ENCODE measurements at regions of chr22 and their contacts with region 1.

Region 1: GRCh38 chr22:17171313-17172171 is 12.5 kb upstream of the HDHD5 start:
- DNase-seq: peak; percentile 95
- H3K4me3 Mint-ChIP-seq: peak overlapping the region; percentile 74
- H3K27ac Mint-ChIP-seq: peak overlapping the region; percentile 61
- H3K4me1 Mint-ChIP-seq: no peaks in the 10 kb centered on the region
- H3K27me3 Mint-ChIP-seq: peaks cover 18% of the 10 kb centered on the region
- CTCF ChIP-seq: peak; percentile 78

Region 2: GRCh38 chr22:17077255-17077654 is 94.3 kb before region 1 on chr22:
- CTCF ChIA-PET with region 1: interaction called, 22 read pairs
- intact Hi-C with region 1: loop called (anchors 2 kb)
- DNase-seq: no peak
- H3K4me3 Mint-ChIP-seq: no peak overlapping the region
- H3K27ac Mint-ChIP-seq: no peak overlapping the region
- H3K4me1 Mint-ChIP-seq: no peaks in the 10 kb centered on the region
- H3K27me3 Mint-ChIP-seq: peaks cover 23% of the 10 kb centered on the region
- CTCF ChIP-seq: no peak

Region 3: GRCh38 chr22:17158568-17159503 is 12.7 kb before region 1 on chr22 and contains the start of gene HDHD5:
- CTCF ChIA-PET with region 1: interaction called, 14 read pairs
- intact Hi-C with region 1: no loop called
- DNase-seq: peak; percentile 88
- H3K4me3 Mint-ChIP-seq: peak within 1 kb of the TSS; percentile 96
- H3K27ac Mint-ChIP-seq: peak within 1 kb of the TSS; percentile 56
- H3K4me1 Mint-ChIP-seq: peaks cover 8% of the 10 kb centered on the region
- H3K27me3 Mint-ChIP-seq: no peaks in the 10 kb centered on the region
- CTCF ChIP-seq: no peak
- total RNA-seq, gene HDHD5: 44.4 and 48.0 TPM in 2 replicates

Region 4: DNA sequence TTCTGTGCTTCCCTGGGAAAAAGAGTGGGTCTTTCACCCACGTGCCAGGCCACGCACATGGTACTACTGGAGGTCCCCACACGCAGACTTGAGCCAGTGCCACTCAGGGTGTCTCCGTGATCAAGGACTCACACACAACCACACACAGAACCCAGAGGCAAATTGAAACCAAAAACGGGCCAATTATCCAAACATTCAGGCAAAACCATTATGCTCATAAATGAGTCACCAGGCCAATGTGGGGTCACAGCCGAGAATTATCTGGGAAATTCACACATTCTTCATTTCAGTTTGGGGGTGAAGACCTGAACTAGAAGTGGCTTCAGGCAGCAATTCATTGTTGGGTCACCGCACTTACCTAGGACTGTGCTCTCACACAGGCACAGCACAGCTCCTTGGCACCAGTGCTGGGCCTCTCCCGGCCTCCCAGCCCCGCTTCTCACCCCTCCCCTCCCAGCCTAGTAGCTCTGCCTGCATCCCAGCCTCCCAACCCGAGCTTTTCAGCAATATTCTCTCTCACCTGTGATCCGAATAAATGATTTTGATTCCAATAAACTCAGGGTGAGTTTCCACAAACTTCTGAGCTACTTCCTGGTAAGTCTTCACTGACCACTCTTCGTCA is 19.7 kb after region 1 on chr22:
- CTCF ChIA-PET with region 1: interaction called, 15 read pairs
- intact Hi-C with region 1: no loop called
- DNase-seq: no peak
- H3K4me3 Mint-ChIP-seq: no peak overlapping the region
- H3K27ac Mint-ChIP-seq: no peak overlapping the region
- H3K4me1 Mint-ChIP-seq: no peaks in the 10 kb centered on the region
- H3K27me3 Mint-ChIP-seq: peaks cover 32% of the 10 kb centered on the region
- CTCF ChIP-seq: no peak

Region 5: DNA sequence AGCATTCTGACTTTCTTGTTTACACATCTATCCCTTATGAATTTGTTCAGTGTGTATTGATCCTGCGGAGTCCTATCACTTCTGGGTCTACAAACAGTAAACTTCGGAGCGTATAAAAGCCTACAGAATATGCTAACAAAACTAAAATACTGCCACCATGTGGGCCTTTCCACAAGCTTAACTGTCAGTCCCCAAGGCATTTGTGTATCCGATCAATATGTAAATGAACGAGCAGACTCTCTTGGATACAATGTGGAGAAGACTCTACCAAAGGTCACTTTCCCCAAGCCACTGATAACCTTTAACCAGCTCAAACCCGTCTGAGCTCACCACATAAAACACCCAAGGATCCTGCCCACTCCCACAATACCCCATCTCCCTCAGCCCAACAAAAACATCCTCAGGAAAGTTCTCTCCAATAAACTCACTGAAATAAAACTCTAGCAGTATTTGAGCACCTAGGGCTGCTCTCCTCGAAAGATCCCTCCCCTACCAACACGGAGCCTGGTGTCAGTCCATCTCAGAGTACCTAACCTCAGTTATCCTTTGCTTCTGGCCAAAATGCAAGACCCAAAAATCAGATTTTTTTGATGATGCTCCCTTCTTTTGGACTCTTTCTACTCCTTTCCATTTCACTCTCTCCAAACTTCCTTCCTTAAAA is 29.9 kb after region 1 on chr22:
- CTCF ChIA-PET with region 1: interaction called, 14 read pairs
- intact Hi-C with region 1: no loop called
- DNase-seq: peak; percentile 32
- H3K4me3 Mint-ChIP-seq: no peak overlapping the region
- H3K27ac Mint-ChIP-seq: no peak overlapping the region
- H3K4me1 Mint-ChIP-seq: peaks cover 14% of the 10 kb centered on the region
- H3K27me3 Mint-ChIP-seq: peaks cover 71% of the 10 kb centered on the region
- CTCF ChIP-seq: peak; percentile 31

Region 6: DNA sequence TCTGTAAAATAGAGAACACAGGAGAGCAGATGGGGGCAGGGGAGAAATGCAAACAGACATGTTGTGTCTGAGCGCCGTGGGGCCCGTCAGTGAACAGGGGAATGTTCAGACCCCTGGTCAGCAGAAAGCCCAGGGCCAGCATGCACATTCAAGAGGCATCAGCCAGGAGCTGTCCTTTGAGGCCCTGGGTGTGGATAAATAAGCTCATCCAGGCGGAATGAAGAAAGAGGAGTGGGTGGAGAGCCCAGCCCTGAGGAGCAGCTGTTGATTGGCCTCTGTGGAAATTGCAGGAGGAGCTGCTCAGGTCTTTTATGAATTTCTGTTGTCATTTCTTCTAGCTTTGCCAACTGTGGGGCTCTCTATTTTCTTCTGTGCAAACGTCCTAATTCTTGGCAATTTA is 148.0 kb after region 1 on chr22:
- CTCF ChIA-PET with region 1: no interaction called
- intact Hi-C with region 1: no loop called
- DNase-seq: no peak
- H3K4me3 Mint-ChIP-seq: no peak overlapping the region
- H3K27ac Mint-ChIP-seq: no peak overlapping the region
- H3K4me1 Mint-ChIP-seq: no peaks in the 10 kb centered on the region
- H3K27me3 Mint-ChIP-seq: peaks cover 46% of the 10 kb centered on the region
- CTCF ChIP-seq: no peak

Region 7: GRCh38 chr22:17366830-17367229 is 195.3 kb after region 1 on chr22:
- CTCF ChIA-PET with region 1: interaction called, 10 read pairs
- intact Hi-C with region 1: no loop called
- DNase-seq: peak; percentile 31
- H3K4me3 Mint-ChIP-seq: no peak overlapping the region
- H3K27ac Mint-ChIP-seq: no peak overlapping the region
- H3K4me1 Mint-ChIP-seq: peaks cover 10% of the 10 kb centered on the region
- H3K27me3 Mint-ChIP-seq: peaks cover 69% of the 10 kb centered on the region
- CTCF ChIP-seq: peak; percentile 28

Region 8: GRCh38 chr22:17501679-17502285 is 330.2 kb after region 1 on chr22:
- CTCF ChIA-PET with region 1: interaction called, 62 read pairs
- intact Hi-C with region 1: loop called (anchors 1 kb)
- DNase-seq: peak; percentile 56
- H3K4me3 Mint-ChIP-seq: no peak overlapping the region
- H3K27ac Mint-ChIP-seq: no peak overlapping the region
- H3K4me1 Mint-ChIP-seq: no peaks in the 10 kb centered on the region
- H3K27me3 Mint-ChIP-seq: peaks cover 44% of the 10 kb centered on the region
- CTCF ChIP-seq: no peak